Heart right ventricle (tissue), 16 donors: ENCODE measurements at regions of chr12 and their contacts with region 1.

Region 1: GRCh38 chr12:96070670-96071279 is 35.4 kb upstream of the LTA4H start:
- DNase-seq: no peak
- ATAC-seq: peak; percentile 38 to 72 (median 61)
- H3K4me3 ChIP-seq: no peak overlapping the region
- H3K27ac ChIP-seq: peak overlapping the region in 6 of 10 donors; percentile 0 to 70 (median 29)
- H3K4me1 ChIP-seq: peaks cover 0 to 46% (median 12%) of the 10 kb centered on the region in 9 donors
- H3K27me3 ChIP-seq: peaks cover 0 to 7% (median 0%) of the 10 kb centered on the region in 7 donors
- CTCF ChIP-seq: peak in 5 of 9 donors; percentile 4 to 35 (median 16)

Region 2: GRCh38 chr12:96108321-96108720 is 37.5 kb after region 1 on chr12:
- intact Hi-C with region 1: loop called in 2 of 10 experiments (anchors 5 kb)
- DNase-seq: peak; percentile 40 to 61
- ATAC-seq: peak; percentile 62 to 93 (median 88)
- H3K4me3 ChIP-seq: peak overlapping the region in 3 of 10 donors; percentile 8 to 14 (median 14)
- H3K27ac ChIP-seq: peak overlapping the region; percentile 63 to 94 (median 80)
- H3K4me1 ChIP-seq: peaks cover 0 to 46% (median 14%) of the 10 kb centered on the region in 9 donors
- H3K27me3 ChIP-seq: no peaks in the 10 kb centered on the region
- CTCF ChIP-seq: no peak

Region 3: DNA sequence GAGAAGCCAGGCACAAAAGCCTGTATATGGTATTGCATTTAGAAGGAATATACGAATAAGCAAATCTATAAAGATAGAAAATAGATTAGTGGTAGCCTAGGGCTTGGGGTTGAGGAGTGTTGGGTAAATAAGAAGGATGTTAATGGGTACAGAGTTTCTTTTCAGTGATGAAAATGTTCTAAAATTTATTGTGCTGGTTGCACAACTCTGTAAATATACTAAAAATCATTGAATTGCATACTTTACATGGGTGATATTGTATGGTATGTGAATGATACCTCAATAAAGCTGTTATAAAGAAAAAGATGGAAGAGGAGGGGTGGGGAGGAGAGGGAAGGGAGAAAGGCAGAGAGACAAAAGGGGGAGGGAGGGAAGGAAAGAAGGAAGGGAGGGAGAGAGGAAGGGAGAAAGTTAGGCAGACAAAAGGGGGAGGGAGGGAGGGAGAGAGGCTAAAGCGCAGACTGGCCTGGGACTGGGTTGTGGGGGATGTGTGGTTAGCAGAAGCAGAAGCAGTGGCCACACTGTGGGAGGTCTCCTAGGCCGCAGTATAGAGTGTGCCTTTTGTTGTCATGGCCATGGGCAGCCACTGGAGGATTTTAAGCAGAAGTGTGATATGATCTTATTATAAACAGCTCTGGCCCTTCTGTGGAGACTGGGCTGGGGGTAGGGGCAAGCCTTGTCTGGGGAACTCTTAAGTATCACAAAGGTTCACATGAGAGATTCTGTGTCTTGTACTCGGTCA is 49.8 kb after region 1 on chr12:
- intact Hi-C with region 1: loop called in 1 of 10 experiments (anchors 5 kb)
- DNase-seq: no peak
- ATAC-seq: peak in 6 of 8 donors; percentile 46 to 67 (median 59)
- H3K4me3 ChIP-seq: no peak overlapping the region
- H3K27ac ChIP-seq: peak overlapping the region in 2 of 10 donors; percentile 19 to 71
- H3K4me1 ChIP-seq: peaks cover 0 to 17% (median 0%) of the 10 kb centered on the region in 9 donors
- H3K27me3 ChIP-seq: peaks cover 0 to 9% (median 0%) of the 10 kb centered on the region in 7 donors
- CTCF ChIP-seq: no peak

Region 4: GRCh38 chr12:96225044-96225855 is 154.5 kb after region 1 on chr12:
- intact Hi-C with region 1: no loop called
- DNase-seq: peak in 1 of 2 donors; percentile 81
- ATAC-seq: peak in 5 of 8 donors; percentile 16 to 51 (median 44)
- H3K4me3 ChIP-seq: no peak overlapping the region
- H3K27ac ChIP-seq: peak overlapping the region in 6 of 10 donors; percentile 13 to 67 (median 52)
- H3K4me1 ChIP-seq: peaks cover 0 to 86% (median 51%) of the 10 kb centered on the region in 9 donors
- H3K27me3 ChIP-seq: no peaks in the 10 kb centered on the region
- CTCF ChIP-seq: no peak